ENCODE measurements at regions of chr4 and their contacts with region 1.

Region 1: DNA sequence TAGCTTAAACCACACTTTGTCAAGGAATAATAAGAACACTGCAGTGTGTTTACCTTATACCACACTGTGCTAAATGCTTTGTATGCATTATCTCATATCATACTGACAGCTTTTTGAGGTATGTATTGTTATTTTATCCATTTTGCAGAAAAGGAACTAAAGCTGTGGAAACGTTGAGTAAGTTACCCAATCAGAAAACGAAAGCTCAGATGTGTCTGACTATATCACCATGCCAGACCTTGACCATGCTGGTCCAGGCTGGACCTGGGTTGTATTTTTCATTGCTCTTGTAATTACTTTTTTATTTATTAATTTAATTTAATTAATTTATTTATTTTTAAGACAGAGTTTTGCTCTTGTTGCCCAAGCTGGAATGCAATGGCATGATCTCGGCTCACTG is 2.1 kb downstream of the HSD17B11 start:
- DNase-seq: no peak
- H3K4me3 ChIP-seq: peak overlapping the region in 2 of 3 donors; percentile 21 to 41
- H3K27ac ChIP-seq: no peak overlapping the region
- H3K4me1 ChIP-seq: peaks cover 0 to 7% (median 3%) of the 10 kb centered on the region in 3 donors
- H3K27me3 ChIP-seq: no peaks in the 10 kb centered on the region
- CTCF ChIP-seq: no peak

Region 2: DNA sequence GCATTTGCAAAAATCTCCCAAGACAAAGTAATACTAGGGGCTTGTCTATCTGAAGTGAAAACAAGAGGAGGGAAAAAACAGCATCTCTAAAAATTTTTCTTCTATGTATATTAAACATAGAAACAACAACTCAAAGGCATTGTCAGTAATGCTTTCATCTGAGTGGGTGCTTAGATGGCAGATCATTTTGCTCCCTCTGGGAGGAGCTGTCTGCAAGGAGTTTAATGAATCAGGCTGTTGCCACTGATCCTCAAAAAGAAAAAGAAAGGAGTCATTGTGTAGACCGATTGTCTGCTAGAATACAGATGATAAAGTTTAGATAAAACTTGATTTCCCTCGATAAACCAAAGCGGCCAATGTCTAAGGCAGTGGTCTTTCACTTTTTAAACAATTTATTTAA is 118.8 kb before region 1 on chr4:
- intact Hi-C with region 1: no loop called
- DNase-seq: peak in 3 of 5 donors; percentile 19 to 64 (median 41)
- H3K4me3 ChIP-seq: no peak overlapping the region
- H3K27ac ChIP-seq: no peak overlapping the region
- H3K4me1 ChIP-seq: peaks cover 0 to 4% (median 0%) of the 10 kb centered on the region in 3 donors
- H3K27me3 ChIP-seq: no peaks in the 10 kb centered on the region
- CTCF ChIP-seq: peak; percentile 55

Region 3: DNA sequence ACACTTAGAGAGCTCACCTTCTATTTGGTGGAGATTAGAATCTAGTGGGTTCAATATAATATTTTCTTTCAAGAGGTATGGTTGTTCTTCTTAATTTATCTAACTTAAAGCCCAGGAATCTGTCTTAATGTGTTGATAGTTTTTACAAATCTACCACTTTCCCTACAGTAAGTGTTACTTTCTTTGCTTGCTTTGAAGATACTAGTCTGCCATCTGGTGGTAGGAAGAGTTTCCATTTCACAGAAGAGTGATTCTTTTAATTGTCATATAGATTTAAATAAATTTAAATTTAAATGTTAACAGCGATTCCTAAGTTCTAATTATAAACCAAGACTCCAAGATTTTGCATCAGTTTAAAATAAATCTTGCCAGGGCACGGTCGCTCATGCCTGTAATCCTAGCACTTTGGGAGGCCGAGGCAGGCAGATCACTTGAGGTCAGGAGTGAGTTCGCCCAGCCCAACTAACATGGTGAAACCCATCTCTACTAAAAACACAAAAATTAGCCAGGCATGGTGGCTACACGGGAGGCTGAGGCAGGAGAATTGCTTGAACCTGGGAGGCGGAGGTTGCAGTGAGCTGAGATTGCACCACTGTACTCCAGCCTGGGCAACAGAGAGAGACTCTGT is 77.0 kb after region 1 on chr4:
- intact Hi-C with region 1: loop called (anchors 10 kb)
- DNase-seq: peak in 2 of 5 donors; percentile 40 to 75
- H3K4me3 ChIP-seq: no peak overlapping the region
- H3K27ac ChIP-seq: no peak overlapping the region
- H3K4me1 ChIP-seq: peaks cover 0 to 3% (median 0%) of the 10 kb centered on the region in 3 donors
- H3K27me3 ChIP-seq: no peaks in the 10 kb centered on the region
- CTCF ChIP-seq: peak; percentile 57